ENCODE measurements at regions of chr1 and their contacts with region 1.

Region 1: DNA sequence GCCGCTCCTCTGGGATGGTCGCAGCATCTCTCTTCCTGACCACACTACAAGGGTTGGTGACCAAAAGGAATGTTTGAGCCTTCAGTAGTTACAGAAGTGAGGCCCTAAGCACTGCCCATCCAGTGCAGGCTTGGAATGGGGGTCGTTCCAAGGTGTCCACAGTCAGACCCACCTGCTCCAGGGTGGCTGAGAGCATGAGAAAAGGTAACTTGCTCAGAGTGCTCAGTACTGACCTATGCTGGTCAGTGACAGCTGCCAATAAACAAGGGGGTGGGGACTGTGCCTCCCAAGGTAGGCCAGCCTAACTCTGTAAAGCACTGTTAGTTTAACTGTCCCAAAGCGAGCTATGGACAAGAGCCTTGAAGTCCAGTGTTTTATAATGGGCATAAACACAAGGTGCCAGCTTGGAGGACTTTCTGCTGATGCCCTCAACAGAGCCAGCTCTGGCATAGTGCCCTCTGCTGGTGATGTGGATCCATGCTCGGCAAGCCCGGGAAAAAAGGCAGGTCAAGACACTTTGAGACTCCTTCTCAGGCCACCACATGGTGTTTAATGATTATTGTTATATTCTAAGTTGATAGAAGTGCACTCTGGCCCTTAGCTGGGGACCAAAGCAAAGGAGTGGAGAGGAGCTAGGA is 78.1 kb upstream of the DNAH14 start:
- DNase-seq: peak; percentile 68
- H3K4me3 ChIP-seq: no peak overlapping the region
- H3K27ac ChIP-seq: no peak overlapping the region
- H3K4me1 ChIP-seq: no peaks in the 10 kb centered on the region
- H3K27me3 ChIP-seq: no peaks in the 10 kb centered on the region
- CTCF ChIP-seq: peak; percentile 49 to 68 (median 63)
- EP300 ChIP-seq: no peak
- POLR2A ChIP-seq: no peak

Region 2: GRCh38 chr1:224519874-224520273 is 331.5 kb before region 1 on chr1:
- in situ Hi-C with region 1: loop called (anchors 5 to 10 kb)
- intact Hi-C with region 1: loop called (anchors 10 kb)
- DNase-seq: no peak
- H3K4me3 ChIP-seq: no peak overlapping the region
- H3K27ac ChIP-seq: no peak overlapping the region
- H3K4me1 ChIP-seq: no peaks in the 10 kb centered on the region
- H3K27me3 ChIP-seq: no peaks in the 10 kb centered on the region
- CTCF ChIP-seq: no peak
- EP300 ChIP-seq: no peak
- POLR2A ChIP-seq: no peak

Region 3: DNA sequence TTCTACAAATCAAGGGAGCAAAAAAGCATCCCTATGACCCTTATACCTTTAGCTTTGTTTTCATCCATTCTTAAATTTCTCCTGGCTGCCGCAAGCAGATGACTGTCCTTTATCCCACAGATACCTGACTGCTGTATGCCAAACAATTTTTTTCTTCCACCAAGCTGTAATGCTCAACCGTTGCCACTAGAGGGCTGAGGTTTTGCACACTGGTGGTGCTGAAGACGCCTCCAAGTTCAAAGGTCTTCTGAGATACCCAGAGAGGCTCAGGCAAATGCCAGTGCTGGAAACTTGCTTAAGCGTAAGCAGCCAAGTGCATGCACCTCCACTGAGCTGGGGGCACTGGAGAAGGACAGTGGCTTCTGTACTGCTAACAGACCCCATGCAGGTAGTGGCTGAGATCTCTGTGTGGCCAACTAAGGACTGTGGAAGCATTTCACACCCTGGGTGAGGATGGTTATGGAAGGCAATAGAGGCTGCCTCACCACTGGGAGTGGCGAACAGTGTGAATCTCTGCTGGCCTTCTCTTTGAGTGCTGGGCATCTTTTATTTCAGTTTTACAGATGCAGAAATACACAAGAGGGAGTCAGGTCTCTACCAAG is 206.7 kb before region 1 on chr1:
- in situ Hi-C with region 1: loop called in 1 of 4 experiments (anchors 25 kb)
- intact Hi-C with region 1: no loop called
- DNase-seq: peak; percentile 52
- H3K4me3 ChIP-seq: no peak overlapping the region
- H3K27ac ChIP-seq: no peak overlapping the region
- H3K4me1 ChIP-seq: no peaks in the 10 kb centered on the region
- H3K27me3 ChIP-seq: no peaks in the 10 kb centered on the region
- CTCF ChIP-seq: peak; percentile 80 to 90 (median 89)
- EP300 ChIP-seq: no peak
- POLR2A ChIP-seq: no peak

Measured in transverse colon (tissue), 4 donors.